A673 (cell line): ENCODE measurements at regions of chr19 and their contacts with region 1.

Region 1: GRCh38 chr19:10870955-10871603 is at the start of gene CARM1:
- DNase-seq: peak; percentile 98
- H3K4me3 ChIP-seq: peak within 1 kb of the TSS; percentile 98
- H3K27ac ChIP-seq: peak within 1 kb of the TSS; percentile 98
- H3K4me1 ChIP-seq: peaks cover 11% of the 10 kb centered on the region
- H3K27me3 ChIP-seq: no peaks in the 10 kb centered on the region
- CTCF ChIP-seq: peak; percentile 48
- total RNA-seq, gene CARM1: 78.7 and 81.5 TPM in 2 replicates

Region 2: DNA sequence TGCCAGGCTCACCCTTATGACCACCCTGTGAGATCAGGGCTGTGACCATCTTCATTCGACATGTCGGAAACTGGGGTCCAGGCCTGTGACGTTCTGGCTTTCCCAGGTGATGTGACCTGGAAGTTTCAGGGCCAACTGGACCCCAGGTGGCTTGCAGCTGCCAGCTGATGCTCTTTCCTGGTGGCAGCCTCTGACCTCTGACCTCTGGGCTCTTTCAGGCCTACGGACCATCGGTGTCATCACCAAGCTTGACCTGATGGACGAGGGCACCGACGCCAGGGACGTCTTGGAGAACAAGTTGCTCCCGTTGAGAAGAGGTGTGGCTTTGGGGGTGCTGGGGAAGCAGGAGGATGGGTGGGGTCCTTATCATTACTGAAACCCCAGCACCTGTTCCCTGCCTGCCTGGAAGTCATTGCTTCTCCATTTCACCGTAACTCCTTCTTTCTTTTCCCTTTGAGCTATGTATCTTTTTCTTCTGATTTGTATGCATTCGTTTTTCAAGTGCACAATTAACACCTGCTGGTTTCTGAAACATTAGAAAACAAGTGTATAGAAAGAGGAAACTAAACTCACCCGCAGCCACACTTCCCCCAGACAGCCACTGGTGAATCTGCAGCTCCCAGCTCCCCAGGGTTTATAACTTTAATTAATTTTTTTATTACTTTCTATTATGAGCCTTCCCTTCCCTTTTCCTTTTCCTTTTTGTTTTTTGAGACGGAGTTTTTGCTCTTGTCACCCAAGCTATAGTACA is 94.0 kb before region 1 on chr19:
- CTCF ChIA-PET with region 1: no interaction called
- POLR2A ChIA-PET with region 1: no interaction called
- intact Hi-C with region 1: no loop called
- DNase-seq: no peak
- H3K4me3 ChIP-seq: no peak overlapping the region
- H3K27ac ChIP-seq: no peak overlapping the region
- H3K4me1 ChIP-seq: no peaks in the 10 kb centered on the region
- H3K27me3 ChIP-seq: no peaks in the 10 kb centered on the region
- CTCF ChIP-seq: no peak

Region 3: DNA sequence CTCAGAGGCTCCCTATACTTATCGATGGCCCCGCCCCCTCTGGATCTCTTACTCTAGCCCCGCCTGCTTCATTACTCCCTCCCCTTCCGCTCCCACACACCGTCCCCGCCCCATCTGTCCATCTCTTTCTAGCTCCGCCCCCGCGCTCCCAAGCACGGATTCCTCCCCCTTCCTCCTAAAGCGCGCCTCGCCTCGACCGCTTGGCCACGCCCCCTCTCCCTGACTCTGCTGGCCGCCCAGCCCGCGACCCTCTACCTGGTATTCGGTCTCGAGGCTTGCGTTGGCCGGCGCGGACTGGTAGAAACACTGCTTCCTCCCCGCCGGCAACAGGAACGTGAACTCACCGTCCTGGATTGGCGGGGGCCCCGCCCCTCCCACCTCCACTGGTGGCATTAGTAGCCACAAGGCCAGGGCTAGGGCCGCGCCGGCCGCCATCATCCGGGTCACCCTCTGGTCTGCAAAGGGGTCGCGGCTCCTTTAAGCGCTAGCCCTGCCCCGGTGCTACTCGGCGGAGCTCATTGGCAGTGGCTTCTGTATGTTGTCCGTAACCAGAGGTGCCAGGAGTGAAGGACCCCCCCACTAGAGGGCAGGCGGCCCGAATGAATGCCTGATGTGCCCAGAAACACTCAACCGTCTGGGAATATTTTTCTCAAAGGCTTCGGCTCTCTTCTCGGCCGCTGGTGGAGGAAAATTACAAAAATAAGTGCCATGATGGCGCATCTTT is 35.2 kb before region 1 on chr19 and contains the start of gene TMED1:
- CTCF ChIA-PET with region 1: interaction called, 7 read pairs
- POLR2A ChIA-PET with region 1: interaction called, 11 read pairs
- intact Hi-C with region 1: no loop called
- DNase-seq: peak; percentile 100
- H3K4me3 ChIP-seq: peak within 1 kb of the TSS; percentile 60
- H3K27ac ChIP-seq: peak within 1 kb of the TSS; percentile 98
- H3K4me1 ChIP-seq: no peaks in the 10 kb centered on the region
- H3K27me3 ChIP-seq: no peaks in the 10 kb centered on the region
- CTCF ChIP-seq: peak; percentile 42
- total RNA-seq, gene TMED1: 23.1 and 27.3 TPM in 2 replicates

Region 4: DNA sequence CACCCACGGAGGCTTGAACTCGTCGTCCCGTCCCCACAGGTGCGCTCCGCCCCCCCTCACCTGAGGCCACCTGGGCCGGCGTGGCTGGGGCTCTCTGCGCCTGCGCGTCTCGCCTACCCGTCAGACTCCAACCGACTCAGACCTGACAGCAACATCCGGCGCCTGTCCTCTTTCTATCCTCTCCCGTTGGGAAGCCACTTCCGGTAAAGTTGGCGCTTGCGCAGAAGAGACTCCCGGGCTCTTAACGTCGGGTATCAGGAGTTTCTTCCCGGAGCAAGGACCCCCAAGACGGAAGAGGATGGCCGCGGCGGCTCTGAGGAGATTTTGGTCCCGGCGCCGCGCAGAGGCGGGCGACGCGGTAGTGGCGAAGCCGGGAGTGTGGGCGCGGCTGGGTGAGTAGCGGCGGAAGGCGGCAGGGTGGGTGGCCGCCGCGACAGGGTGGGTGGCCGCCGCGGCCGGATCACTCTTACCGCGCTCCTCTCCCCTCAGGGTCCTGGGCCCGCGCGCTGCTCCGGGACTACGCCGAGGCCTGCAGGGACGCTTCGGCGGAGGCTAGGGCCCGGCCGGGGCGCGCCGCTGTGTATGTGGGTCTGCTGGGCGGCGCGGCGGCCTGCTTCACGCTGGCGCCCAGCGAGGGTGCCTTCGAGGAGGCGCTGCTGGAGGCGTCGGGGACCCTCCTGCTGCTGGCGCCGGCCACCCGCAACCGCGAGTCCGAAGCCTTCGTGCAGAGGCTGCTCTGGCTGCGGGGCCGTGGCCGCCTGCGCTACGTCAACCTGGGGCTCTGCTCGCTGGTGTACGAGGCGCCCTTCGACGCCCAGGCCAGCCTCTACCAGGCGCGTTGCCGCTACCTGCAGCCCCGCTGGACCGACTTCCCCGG is 57.7 kb after region 1 on chr19 and contains the starts of genes TIMM29 and YIPF2:
- CTCF ChIA-PET with region 1: no interaction called
- POLR2A ChIA-PET with region 1: no interaction called
- intact Hi-C with region 1: loop called (anchors 5 kb)
- DNase-seq: peak; percentile 99
- H3K4me3 ChIP-seq: peak within 1 kb of the TSS; percentile 93
- H3K27ac ChIP-seq: peak within 1 kb of the TSS; percentile 80
- H3K4me1 ChIP-seq: peaks cover 15% of the 10 kb centered on the region
- H3K27me3 ChIP-seq: no peaks in the 10 kb centered on the region
- CTCF ChIP-seq: no peak
- total RNA-seq, gene TIMM29: 30.0 and 32.5 TPM in 2 replicates
- total RNA-seq, gene YIPF2: 24.5 and 24.6 TPM in 2 replicates

Region 5: GRCh38 chr19:10946964-10947657 is 76.0 kb after region 1 on chr19:
- CTCF ChIA-PET with region 1: interaction called, 12 read pairs
- POLR2A ChIA-PET with region 1: no interaction called
- intact Hi-C with region 1: no loop called
- DNase-seq: peak; percentile 82
- H3K4me3 ChIP-seq: no peak overlapping the region
- H3K27ac ChIP-seq: peak overlapping the region; percentile 38
- H3K4me1 ChIP-seq: peaks cover 25% of the 10 kb centered on the region
- H3K27me3 ChIP-seq: no peaks in the 10 kb centered on the region
- CTCF ChIP-seq: no peak